Heart right ventricle (tissue), 16 donors: ENCODE measurements at regions of chr15 and their contacts with region 1.

Region 1: DNA sequence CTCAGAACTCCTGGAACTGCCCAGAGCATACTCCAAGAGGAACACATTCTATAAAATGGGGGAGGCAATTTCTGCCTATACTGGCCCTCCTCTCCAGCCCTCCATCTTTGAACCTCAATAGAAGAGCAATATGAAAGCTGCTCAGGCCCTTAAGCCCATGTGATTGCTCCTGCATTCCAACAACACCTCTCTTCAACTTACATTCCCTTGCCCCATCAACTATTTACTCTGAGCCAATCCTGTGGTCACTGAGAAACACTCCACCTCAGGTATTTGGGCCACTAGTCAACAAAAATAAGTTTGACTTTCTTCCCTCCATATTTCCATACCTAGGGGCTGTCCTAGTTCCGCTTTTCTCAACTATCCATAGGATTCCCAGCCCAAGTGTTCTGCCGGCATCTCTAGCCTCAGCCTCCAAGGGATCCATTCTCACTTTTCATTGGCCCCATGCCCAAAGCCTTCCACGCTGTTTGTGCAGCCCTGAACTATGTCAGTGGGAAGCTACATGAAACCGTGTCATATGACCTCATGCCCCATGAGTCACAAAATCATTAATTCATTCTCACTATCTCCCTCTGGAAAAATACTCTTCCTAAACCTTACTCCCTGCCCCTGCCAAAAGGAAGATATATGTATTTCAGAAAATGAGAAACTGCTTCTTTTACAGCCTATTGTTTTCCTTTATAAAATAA is 61.6 kb downstream of the GJD2 start:
- DNase-seq: no peak
- ATAC-seq: no peak
- H3K4me3 ChIP-seq: no peak overlapping the region
- H3K27ac ChIP-seq: no peak overlapping the region
- H3K4me1 ChIP-seq: peaks cover 0 to 4% (median 0%) of the 10 kb centered on the region in 9 donors
- H3K27me3 ChIP-seq: no peaks in the 10 kb centered on the region
- CTCF ChIP-seq: no peak

Region 2: DNA sequence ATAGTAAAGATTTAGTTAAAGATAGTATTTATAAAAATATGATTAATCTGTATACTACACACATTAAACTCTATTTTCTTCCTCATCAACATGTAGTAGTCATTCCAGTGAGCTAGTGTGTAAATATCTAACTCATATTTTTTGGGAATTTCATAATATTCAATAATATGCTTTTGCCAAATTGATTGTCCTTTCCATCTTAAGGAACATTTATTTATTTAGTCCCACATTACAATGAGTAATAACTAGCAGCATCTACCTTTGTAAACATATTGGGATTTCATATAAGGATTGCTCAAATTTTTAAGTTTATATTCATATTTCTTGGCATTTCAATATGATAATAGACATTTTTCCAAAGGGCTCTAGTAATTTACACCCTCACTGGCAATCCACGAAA is 55.9 kb before region 1 on chr15:
- intact Hi-C with region 1: loop called in 2 of 10 experiments (anchors 5 kb)
- DNase-seq: no peak
- ATAC-seq: no peak
- H3K4me3 ChIP-seq: no peak overlapping the region
- H3K27ac ChIP-seq: no peak overlapping the region
- H3K4me1 ChIP-seq: no peaks in the 10 kb centered on the region
- H3K27me3 ChIP-seq: no peaks in the 10 kb centered on the region
- CTCF ChIP-seq: no peak

Region 3: GRCh38 chr15:34644061-34644460 is 49.1 kb before region 1 on chr15:
- intact Hi-C with region 1: loop called in 2 of 10 experiments (anchors 5 kb)
- DNase-seq: no peak
- ATAC-seq: no peak
- H3K4me3 ChIP-seq: no peak overlapping the region
- H3K27ac ChIP-seq: no peak overlapping the region
- H3K4me1 ChIP-seq: no peaks in the 10 kb centered on the region
- H3K27me3 ChIP-seq: peaks cover 0 to 8% (median 0%) of the 10 kb centered on the region in 7 donors
- CTCF ChIP-seq: no peak